ENCODE measurements at regions of chr12 and their contacts with region 1.

Region 1: DNA sequence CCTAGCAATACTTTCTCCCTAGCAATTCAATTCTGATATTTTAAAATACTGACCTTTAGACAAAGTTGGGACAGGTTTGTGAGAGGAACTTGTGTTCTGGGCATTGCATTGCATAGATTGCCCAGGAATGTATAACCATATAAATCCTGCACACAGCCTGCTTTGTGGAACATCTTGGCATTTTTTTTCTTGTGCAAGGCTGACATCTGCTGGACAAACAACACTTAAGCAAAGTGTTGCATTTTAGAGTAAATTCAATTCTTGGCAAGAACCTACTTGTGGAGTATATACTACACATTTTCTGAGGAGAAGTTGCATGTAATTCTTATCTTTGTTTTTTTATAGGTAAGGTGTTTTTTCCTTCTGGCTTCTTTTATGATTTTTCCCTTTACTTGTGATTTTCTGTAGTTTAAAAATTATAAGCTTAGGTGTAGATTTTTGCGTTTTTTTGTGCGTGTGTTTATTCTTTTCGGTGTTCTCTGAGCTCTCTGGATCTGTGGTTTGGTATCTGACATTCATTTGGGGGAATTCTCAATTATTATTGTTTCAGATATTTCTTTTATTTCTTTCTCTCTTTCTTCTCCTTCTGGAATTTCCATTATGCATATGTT is 26.4 kb downstream of the TESPA1 start:
- DNase-seq: peak; percentile 75
- H3K4me3 Mint-ChIP-seq: no peak overlapping the region
- H3K27ac Mint-ChIP-seq: peak overlapping the region; percentile 76
- H3K4me1 Mint-ChIP-seq: peaks cover 88% of the 10 kb centered on the region
- H3K27me3 Mint-ChIP-seq: no peaks in the 10 kb centered on the region

Region 2: DNA sequence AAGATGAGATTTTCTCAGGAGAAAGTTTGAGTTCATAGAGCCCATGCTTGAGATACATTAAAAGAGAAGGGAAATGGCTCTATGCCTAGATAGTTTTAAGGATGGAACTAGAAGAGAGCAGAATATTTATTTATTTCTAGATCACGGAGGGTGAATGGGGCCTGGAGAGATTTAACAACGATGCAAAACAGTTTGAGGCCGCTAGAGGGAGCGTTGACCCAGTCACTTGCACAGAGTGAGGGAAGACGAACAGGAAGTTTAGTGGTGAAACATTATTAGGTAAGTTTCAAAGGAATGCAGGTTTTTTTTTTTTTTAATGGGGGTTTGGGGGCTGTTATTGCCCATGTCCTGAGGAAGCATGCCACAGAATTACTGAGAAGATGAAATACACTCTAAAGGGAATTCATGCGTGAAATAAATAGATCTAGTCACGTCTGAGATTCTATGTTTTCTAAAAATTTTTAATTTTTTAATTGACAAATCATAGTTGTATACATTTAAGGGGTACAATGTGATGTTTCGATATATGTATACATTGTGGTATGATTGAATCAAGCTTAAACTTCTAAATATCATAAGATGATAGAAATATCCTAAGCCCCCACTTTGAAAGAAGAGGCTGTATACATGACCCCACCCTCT is 354.9 kb before region 1 on chr12:
- CTCF ChIA-PET with region 1: no interaction called
- intact Hi-C with region 1: loop called (anchors 10 kb)
- DNase-seq: peak; percentile 87
- H3K4me3 Mint-ChIP-seq: no peak overlapping the region
- H3K27ac Mint-ChIP-seq: no peak overlapping the region
- H3K4me1 Mint-ChIP-seq: peaks cover 2% of the 10 kb centered on the region
- H3K27me3 Mint-ChIP-seq: no peaks in the 10 kb centered on the region

Region 3: GRCh38 chr12:54723379-54724256 is 234.5 kb before region 1 on chr12:
- CTCF ChIA-PET with region 1: interaction called, 5 read pairs
- intact Hi-C with region 1: loop called (anchors 1 kb)
- DNase-seq: peak; percentile 46
- H3K4me3 Mint-ChIP-seq: no peak overlapping the region
- H3K27ac Mint-ChIP-seq: no peak overlapping the region
- H3K4me1 Mint-ChIP-seq: peaks cover 19% of the 10 kb centered on the region
- H3K27me3 Mint-ChIP-seq: no peaks in the 10 kb centered on the region

Region 4: GRCh38 chr12:54759751-54760150 is 198.4 kb before region 1 on chr12:
- CTCF ChIA-PET with region 1: interaction called, 7 read pairs
- intact Hi-C with region 1: loop called (anchors 1 kb)
- DNase-seq: peak; percentile 38
- H3K4me3 Mint-ChIP-seq: no peak overlapping the region
- H3K27ac Mint-ChIP-seq: no peak overlapping the region
- H3K4me1 Mint-ChIP-seq: peaks cover 19% of the 10 kb centered on the region
- H3K27me3 Mint-ChIP-seq: no peaks in the 10 kb centered on the region

Region 5: DNA sequence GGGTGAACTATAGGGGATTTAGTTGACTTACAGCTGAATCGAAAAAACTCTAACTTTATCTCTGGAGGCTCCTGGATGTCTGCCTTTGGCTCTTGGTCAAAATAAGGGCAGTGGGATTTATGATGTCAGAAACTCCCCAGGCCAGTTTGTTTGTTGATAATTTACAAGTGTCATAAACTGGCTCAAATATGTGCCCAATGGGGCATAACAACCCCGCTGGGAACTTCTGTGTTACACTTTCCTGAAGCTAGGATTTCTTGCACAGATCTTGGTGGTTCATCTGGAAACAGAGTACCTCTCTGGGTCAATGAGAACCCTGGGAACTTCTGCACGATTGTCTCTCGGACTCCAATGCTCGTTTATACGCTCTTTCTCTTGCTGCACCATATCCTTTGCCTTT is 162.5 kb before region 1 on chr12:
- CTCF ChIA-PET with region 1: no interaction called
- intact Hi-C with region 1: no loop called
- DNase-seq: no peak
- H3K4me3 Mint-ChIP-seq: no peak overlapping the region
- H3K27ac Mint-ChIP-seq: no peak overlapping the region
- H3K4me1 Mint-ChIP-seq: no peaks in the 10 kb centered on the region
- H3K27me3 Mint-ChIP-seq: no peaks in the 10 kb centered on the region

Region 6: DNA sequence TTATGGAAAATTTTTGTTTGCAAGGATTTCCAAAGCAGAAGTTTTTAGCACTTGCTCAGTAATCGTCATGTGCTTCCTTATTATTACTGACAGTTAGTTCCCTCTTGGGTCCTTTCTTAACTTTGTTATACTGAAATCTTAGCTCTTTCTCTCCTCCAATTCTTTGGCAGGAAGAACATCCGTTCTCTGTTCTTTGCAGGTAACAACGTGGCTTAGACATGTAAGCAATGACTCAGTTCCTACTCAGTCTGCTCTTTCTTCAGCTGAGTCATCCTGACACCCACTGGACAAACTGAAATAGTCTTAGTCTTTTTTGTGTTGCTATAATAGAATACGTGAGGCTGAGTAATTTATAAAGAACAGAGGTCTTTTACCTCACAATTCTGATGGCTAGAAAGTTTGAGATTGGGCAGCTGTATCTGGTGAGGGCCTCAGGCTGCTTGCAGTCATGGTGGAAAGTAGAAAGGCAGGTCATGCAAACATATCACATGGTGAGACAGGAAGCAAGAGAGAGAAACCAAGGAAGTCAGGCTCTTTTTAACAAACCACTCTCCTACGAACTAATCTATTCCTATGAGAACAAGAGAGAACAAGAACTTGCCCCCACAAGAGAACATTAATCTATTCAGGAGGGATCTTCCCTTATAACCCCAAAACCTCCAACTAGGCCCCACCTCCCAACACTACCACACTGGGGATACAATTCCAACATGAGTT is 22.8 kb before region 1 on chr12:
- CTCF ChIA-PET with region 1: interaction called, 16 read pairs
- intact Hi-C with region 1: loop called (anchors 1 kb)
- DNase-seq: peak; percentile 69
- H3K4me3 Mint-ChIP-seq: peak overlapping the region; percentile 51
- H3K27ac Mint-ChIP-seq: peak overlapping the region; percentile 93
- H3K4me1 Mint-ChIP-seq: peaks cover 64% of the 10 kb centered on the region
- H3K27me3 Mint-ChIP-seq: no peaks in the 10 kb centered on the region